ENCODE measurements at regions of chr14 and their contacts with region 1.

Region 1: GRCh38 chr14:30521899-30522736 is 36.8 kb upstream of the G2E3 start:
- DNase-seq: no peak
- ATAC-seq: no peak
- H3K4me3 Mint-ChIP-seq: no peak overlapping the region
- H3K27ac Mint-ChIP-seq: no peak overlapping the region
- H3K4me1 Mint-ChIP-seq: peaks cover 6% of the 10 kb centered on the region
- H3K27me3 Mint-ChIP-seq: peaks cover 5% of the 10 kb centered on the region

Region 2: DNA sequence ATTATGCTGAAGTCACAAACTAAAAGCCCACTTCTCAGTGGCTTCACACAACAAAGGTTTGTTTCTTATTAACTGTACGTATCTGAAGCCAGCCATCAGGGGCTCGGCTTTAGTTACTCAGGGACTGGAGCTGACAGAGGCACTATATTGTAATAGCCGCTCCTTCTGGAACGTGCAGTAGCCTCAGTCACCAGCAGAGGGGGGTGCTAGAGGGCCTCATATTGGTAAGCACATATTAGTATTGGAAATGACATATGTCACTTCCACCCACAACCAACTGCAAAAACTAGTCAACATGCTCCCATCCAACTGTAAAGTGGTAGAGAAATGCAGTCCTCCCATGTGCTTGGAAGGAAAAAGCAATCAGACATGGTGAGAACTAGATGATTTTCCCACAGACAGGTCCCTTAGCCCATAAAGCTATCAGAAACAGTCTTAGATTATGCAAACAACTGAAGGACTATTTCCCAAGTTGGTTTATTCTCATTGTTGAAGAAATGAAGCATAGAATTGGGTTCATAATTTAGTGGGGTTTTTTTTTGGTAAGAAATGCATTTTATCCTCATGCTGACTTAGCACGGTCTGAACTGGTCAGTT is 146.7 kb before region 1 on chr14:
- CTCF ChIA-PET with region 1: interaction called, 46 read pairs
- POLR2A ChIA-PET with region 1: no interaction called
- DNase-seq: peak; percentile 69
- ATAC-seq: peak; percentile 89
- H3K4me3 Mint-ChIP-seq: no peak overlapping the region
- H3K27ac Mint-ChIP-seq: no peak overlapping the region
- H3K4me1 Mint-ChIP-seq: no peaks in the 10 kb centered on the region
- H3K27me3 Mint-ChIP-seq: no peaks in the 10 kb centered on the region